ENCODE measurements at regions of chr4 and their contacts with region 1.

Region 1: DNA sequence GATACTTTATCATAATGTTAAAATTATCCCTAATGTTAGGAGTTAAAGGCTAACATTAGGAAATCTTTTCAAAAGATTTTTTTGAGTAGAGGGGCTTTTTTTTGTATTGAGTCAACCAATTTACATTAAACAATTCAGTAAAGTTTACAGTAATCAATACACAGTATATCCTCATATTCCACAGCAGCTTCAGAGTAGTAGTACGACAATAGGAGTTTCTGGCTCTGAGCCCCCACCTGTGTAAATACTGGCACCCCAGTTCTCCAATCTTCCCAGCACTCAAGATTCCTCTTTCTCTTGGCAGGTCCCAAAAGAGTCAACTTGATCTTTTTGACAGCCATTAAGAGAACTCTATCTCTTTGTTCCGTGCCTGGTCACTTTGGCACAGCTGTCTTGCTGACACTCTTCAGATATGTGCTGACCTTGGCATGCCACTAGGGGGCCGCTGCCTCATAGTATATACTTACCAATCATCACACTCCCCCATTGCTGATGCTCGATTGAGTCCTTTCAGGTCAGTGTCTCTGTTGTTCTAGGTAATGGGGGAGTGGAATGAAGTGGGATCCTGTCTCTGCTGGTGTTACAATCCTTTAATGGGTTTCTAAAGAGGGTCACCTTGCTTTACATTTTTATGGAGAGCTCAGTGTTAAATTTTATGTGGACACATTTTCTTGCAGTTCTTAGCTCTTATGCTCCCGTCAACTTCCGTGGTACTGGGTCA is 19.5 kb upstream of the CCNI start:
- DNase-seq: peak; percentile 82
- H3K4me3 Mint-ChIP-seq: no peak overlapping the region
- H3K27ac Mint-ChIP-seq: no peak overlapping the region
- H3K4me1 Mint-ChIP-seq: peaks cover 7% of the 10 kb centered on the region
- H3K27me3 Mint-ChIP-seq: peaks cover 4% of the 10 kb centered on the region

Region 2: GRCh38 chr4:77082886-77083608 is 12.2 kb before region 1 on chr4:
- CTCF ChIA-PET with region 1: interaction called, 18 read pairs
- DNase-seq: no peak
- H3K4me3 Mint-ChIP-seq: no peak overlapping the region
- H3K27ac Mint-ChIP-seq: no peak overlapping the region
- H3K4me1 Mint-ChIP-seq: peaks cover 9% of the 10 kb centered on the region
- H3K27me3 Mint-ChIP-seq: no peaks in the 10 kb centered on the region

Region 3: DNA sequence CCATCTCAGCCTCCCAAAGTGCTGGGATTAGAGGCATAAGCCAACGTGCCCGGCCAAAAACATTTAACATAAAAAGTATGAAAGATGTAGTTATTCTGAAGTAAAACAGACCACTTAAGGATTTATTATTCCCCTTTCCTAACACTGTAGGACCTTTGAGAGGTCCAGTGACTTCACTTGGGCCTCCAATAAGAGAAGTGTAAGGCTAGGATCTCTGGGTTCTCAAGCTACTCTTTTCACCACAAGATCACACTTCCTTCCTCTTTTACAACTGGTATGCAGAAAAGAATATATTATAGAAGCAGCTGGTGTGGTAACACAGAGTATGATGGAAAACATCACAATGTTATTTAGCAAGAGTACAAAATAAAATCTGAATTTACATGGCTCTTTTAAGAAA is 31.5 kb after region 1 on chr4:
- CTCF ChIA-PET with region 1: interaction called, 13 read pairs
- DNase-seq: no peak
- H3K4me3 Mint-ChIP-seq: no peak overlapping the region
- H3K27ac Mint-ChIP-seq: no peak overlapping the region
- H3K4me1 Mint-ChIP-seq: peaks cover 5% of the 10 kb centered on the region
- H3K27me3 Mint-ChIP-seq: peaks cover 3% of the 10 kb centered on the region

Measured in activated naive CD4-positive, alpha-beta T cell treated with anti-CD3 and anti-CD28 coated beads, Interleukin-2, amount 10 ng/mL, durations not matched to agents 7 days and 5 days (primary cell).